ENCODE measurements at regions of chr1 and their contacts with region 1.

Region 1: GRCh38 chr1:226827968-226828513 is 42.4 kb upstream of the PSEN2 start:
- DNase-seq: peak; percentile 99
- ATAC-seq: peak; percentile 98
- H3K4me3 ChIP-seq: no peak overlapping the region
- H3K27ac ChIP-seq: no peak overlapping the region
- H3K4me1 ChIP-seq: no peaks in the 10 kb centered on the region
- H3K27me3 ChIP-seq: no peaks in the 10 kb centered on the region

Region 2: DNA sequence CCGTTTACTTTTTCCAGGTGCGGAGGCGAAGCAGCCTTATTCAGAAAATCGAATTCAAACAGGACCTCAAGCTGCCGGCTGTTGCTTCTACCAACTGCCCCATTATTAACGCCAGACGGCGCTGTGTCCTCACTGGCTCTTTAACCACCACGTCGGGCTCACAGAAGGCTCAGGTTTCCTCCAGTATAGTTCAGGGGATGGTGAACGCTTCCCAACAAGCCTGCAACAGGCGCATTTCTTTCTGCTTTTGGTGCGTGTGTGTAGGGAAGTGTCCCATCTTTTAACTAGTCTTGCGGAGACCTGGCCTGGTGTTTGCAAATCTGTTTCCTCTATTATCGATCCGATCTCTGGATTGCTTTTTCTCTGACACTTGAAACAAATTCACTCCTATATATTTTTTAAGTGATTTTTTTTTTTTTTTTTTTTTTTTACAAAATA is 280.3 kb before region 1 on chr1:
- intact Hi-C with region 1: loop called (anchors 5 kb)
- DNase-seq: peak; percentile 83 to 92
- ATAC-seq: peak; percentile 85
- H3K4me3 ChIP-seq: no peak overlapping the region
- H3K27ac ChIP-seq: no peak overlapping the region
- H3K4me1 ChIP-seq: no peaks in the 10 kb centered on the region
- H3K27me3 ChIP-seq: no peaks in the 10 kb centered on the region

Region 3: GRCh38 chr1:226626577-226626956 is 201.5 kb before region 1 on chr1:
- intact Hi-C with region 1: loop called in 1 of 2 experiments (anchors 2 kb)
- DNase-seq: peak; percentile 86 to 92
- ATAC-seq: peak; percentile 94
- H3K4me3 ChIP-seq: no peak overlapping the region
- H3K27ac ChIP-seq: no peak overlapping the region
- H3K4me1 ChIP-seq: no peaks in the 10 kb centered on the region
- H3K27me3 ChIP-seq: no peaks in the 10 kb centered on the region

Region 4: GRCh38 chr1:226634166-226634588 is 193.9 kb before region 1 on chr1:
- intact Hi-C with region 1: loop called (anchors 1 to 2 kb)
- DNase-seq: peak; percentile 85 to 96
- ATAC-seq: peak; percentile 87
- H3K4me3 ChIP-seq: no peak overlapping the region
- H3K27ac ChIP-seq: no peak overlapping the region
- H3K4me1 ChIP-seq: no peaks in the 10 kb centered on the region
- H3K27me3 ChIP-seq: no peaks in the 10 kb centered on the region

Region 5: GRCh38 chr1:226786550-226786949 is 41.5 kb before region 1 on chr1:
- intact Hi-C with region 1: no loop called
- DNase-seq: no peak
- ATAC-seq: no peak
- H3K4me3 ChIP-seq: no peak overlapping the region
- H3K27ac ChIP-seq: no peak overlapping the region
- H3K4me1 ChIP-seq: no peaks in the 10 kb centered on the region
- H3K27me3 ChIP-seq: no peaks in the 10 kb centered on the region

Region 6: DNA sequence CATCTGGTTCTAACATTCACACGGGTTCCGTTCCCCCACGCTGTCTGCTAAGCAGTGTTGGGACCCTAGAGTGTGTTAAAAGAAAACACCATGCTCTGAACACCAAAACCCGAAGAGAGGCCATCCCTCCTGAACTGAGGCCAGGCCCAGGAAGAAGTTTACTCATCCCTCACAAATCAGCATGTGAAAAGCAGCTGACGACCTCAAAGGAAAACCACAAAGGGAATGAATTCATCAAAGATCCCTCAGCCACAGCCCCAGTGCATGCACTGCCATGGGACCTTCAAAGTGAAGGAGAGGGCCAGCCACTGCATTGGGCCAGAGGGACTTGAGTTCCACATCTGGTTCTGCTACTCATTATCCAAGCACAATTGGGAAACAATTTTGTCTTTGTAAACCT is 35.4 kb after region 1 on chr1:
- intact Hi-C with region 1: no loop called
- DNase-seq: no peak
- ATAC-seq: no peak
- H3K4me3 ChIP-seq: no peak overlapping the region
- H3K27ac ChIP-seq: no peak overlapping the region
- H3K4me1 ChIP-seq: no peaks in the 10 kb centered on the region
- H3K27me3 ChIP-seq: no peaks in the 10 kb centered on the region

Region 7: DNA sequence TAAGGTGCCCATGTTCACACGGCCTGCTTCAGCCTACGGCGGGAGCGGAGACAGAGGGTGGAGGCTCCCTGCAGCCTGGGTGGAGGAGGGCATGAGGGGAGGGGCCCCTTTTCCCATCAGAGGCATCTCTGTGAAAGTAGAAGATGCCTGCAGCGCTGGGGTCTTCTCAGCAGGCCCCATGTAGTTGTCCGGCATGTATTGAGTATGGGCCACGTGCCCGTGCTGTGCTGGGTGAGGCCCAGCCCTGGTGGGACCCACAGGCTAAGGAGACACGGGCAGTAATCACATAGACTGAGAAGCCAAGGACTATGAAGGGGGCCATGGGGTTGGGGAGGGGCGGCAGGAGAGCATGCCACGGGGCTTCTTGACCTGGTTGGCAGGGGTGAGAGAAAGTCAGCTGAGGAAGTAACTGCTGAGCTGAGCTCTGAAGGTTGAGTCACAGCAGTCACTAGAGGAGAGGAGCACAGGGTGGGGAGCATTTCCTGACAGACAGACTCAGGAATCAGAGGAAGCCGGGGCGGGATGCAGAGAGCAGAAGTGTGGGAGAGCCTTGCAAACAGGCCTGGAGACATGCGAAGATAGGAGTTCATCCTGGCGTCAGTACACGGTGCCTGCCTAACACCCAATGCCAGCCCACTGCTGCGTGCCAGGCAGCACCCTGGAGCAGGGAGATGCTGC is 63.9 kb after region 1 on chr1:
- intact Hi-C with region 1: no loop called
- DNase-seq: peak; percentile 42 to 58
- ATAC-seq: no peak
- H3K4me3 ChIP-seq: no peak overlapping the region
- H3K27ac ChIP-seq: no peak overlapping the region
- H3K4me1 ChIP-seq: no peaks in the 10 kb centered on the region
- H3K27me3 ChIP-seq: no peaks in the 10 kb centered on the region

Measured in aorta (tissue), 5 donors.